Ovary (tissue), 10 donors: ENCODE measurements at regions of chr15 and their contacts with region 1.

Region 1: DNA sequence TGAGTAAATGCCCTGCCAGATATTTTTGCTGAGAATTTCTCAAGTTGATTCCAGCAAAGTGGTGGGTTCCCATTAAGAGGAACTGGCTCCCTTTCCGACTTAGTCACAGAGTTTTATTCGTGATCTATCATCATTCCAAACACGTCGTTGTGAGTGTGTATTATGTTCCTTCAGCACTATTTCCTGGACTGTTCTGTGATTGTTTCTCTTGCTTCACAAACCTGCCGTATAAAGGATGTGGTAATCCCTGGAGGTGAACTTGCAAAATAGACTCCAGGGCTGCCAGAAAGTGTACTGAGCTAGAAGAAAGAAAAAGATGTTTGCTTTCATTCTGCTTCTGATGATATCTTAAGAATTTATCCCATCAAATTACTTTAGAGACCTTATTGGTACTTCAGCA is 14.5 kb upstream of the CAPN3 start:
- DNase-seq: no peak
- H3K4me3 ChIP-seq: no peak overlapping the region
- H3K27ac ChIP-seq: no peak overlapping the region
- H3K4me1 ChIP-seq: no peaks in the 10 kb centered on the region
- H3K27me3 ChIP-seq: no peaks in the 10 kb centered on the region
- CTCF ChIP-seq: no peak
- EP300 ChIP-seq: no peak
- POLR2A ChIP-seq: no peak

Region 2: DNA sequence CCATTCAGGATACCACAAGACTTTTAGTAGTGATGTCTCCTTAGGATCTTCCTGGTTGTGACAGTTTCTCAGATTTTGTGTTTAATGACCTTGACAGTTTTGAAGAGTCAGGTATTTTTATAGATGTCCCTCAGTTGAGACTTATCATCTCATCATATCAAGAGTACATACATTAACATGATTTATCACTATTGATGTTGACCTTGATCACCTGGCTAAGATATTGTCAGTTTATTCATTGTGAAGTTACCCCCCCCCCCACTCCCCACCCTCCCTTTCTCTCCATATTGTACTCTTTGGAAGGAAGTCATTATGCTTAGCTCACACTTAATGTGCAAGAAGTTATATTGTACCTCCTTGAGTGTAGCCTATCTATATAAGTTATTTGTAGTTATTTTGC is 641.6 kb before region 1 on chr15:
- intact Hi-C with region 1: no loop called
- DNase-seq: no peak
- H3K4me3 ChIP-seq: no peak overlapping the region
- H3K27ac ChIP-seq: no peak overlapping the region
- H3K4me1 ChIP-seq: no peaks in the 10 kb centered on the region
- H3K27me3 ChIP-seq: no peaks in the 10 kb centered on the region
- CTCF ChIP-seq: no peak
- EP300 ChIP-seq: no peak
- POLR2A ChIP-seq: no peak

Region 3: GRCh38 chr15:43230640-43231115 is 885.9 kb after region 1 on chr15:
- intact Hi-C with region 1: loop called in 1 of 4 experiments (anchors 5 kb)
- DNase-seq: no peak
- H3K4me3 ChIP-seq: no peak overlapping the region
- H3K27ac ChIP-seq: no peak overlapping the region
- H3K4me1 ChIP-seq: no peaks in the 10 kb centered on the region
- H3K27me3 ChIP-seq: no peaks in the 10 kb centered on the region
- CTCF ChIP-seq: no peak
- EP300 ChIP-seq: no peak
- POLR2A ChIP-seq: no peak